Heart right ventricle (tissue), 16 donors: ENCODE measurements at regions of chr1 and their contacts with region 1.

Region 1: GRCh38 chr1:186082235-186082937 is 292.7 kb downstream of the TPR start:
- DNase-seq: peak; percentile 38 to 88
- ATAC-seq: peak; percentile 69 to 96 (median 91)
- H3K4me3 ChIP-seq: no peak overlapping the region
- H3K27ac ChIP-seq: peak overlapping the region in 5 of 10 donors; percentile 0 to 32 (median 12)
- H3K4me1 ChIP-seq: peaks cover 0 to 11% (median 0%) of the 10 kb centered on the region in 9 donors
- H3K27me3 ChIP-seq: no peaks in the 10 kb centered on the region
- CTCF ChIP-seq: no peak

Region 2: GRCh38 chr1:185984113-185984836 is 98.1 kb before region 1 on chr1:
- intact Hi-C with region 1: no loop called
- DNase-seq: no peak
- ATAC-seq: peak; percentile 78 to 95 (median 86)
- H3K4me3 ChIP-seq: no peak overlapping the region
- H3K27ac ChIP-seq: peak overlapping the region in 6 of 10 donors; percentile 15 to 68 (median 50)
- H3K4me1 ChIP-seq: peaks cover 0 to 27% (median 11%) of the 10 kb centered on the region in 9 donors
- H3K27me3 ChIP-seq: no peaks in the 10 kb centered on the region
- CTCF ChIP-seq: no peak

Region 3: GRCh38 chr1:186009039-186009737 is 73.2 kb before region 1 on chr1:
- intact Hi-C with region 1: no loop called
- DNase-seq: no peak
- ATAC-seq: peak in 6 of 8 donors; percentile 67 to 88 (median 77)
- H3K4me3 ChIP-seq: no peak overlapping the region
- H3K27ac ChIP-seq: peak overlapping the region in 9 of 10 donors; percentile 6 to 72 (median 53)
- H3K4me1 ChIP-seq: peaks cover 0 to 20% (median 0%) of the 10 kb centered on the region in 9 donors
- H3K27me3 ChIP-seq: no peaks in the 10 kb centered on the region
- CTCF ChIP-seq: no peak

Region 4: DNA sequence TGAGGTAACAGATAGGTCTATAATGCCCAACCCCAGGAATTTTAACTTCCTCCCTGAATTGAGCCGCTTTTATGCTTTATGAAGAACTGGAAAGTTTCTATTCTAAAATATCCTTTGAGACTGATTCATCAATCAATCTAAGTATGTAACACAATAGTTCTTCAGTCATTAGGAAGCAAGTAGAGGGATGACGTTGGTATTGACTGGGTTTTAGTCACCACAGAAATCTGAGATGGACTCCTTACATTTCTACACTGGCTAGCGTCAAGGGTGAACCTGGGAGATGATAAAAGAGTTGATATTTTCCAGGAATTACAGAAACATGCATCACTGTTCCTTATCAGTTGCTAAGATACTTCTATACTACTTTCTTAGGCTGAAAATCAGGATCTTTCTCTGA is 40.2 kb before region 1 on chr1:
- intact Hi-C with region 1: loop called in 1 of 10 experiments (anchors 5 kb)
- DNase-seq: no peak
- ATAC-seq: no peak
- H3K4me3 ChIP-seq: no peak overlapping the region
- H3K27ac ChIP-seq: no peak overlapping the region
- H3K4me1 ChIP-seq: peaks cover 0 to 24% (median 9%) of the 10 kb centered on the region in 9 donors
- H3K27me3 ChIP-seq: no peaks in the 10 kb centered on the region
- CTCF ChIP-seq: no peak

Region 5: DNA sequence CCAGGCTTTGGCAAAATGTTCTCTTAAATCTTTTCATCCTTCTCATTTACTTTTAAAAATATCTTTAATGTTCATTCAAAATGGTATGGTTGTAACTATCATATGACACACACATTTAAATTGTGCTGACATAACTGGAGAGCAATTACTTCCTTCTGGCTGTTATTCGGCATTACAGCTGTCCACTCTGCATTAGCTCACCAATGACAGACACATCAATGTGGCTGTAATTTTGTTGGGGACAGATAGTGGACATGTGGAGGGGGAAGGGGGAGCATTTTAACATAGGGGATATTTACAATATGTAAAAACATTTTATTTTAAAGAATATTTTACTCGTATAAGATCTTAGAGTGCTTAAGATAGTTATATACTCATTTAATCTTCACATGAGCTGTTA is 28.4 kb before region 1 on chr1:
- intact Hi-C with region 1: loop called in 1 of 10 experiments (anchors 1 kb)
- DNase-seq: no peak
- ATAC-seq: no peak
- H3K4me3 ChIP-seq: no peak overlapping the region
- H3K27ac ChIP-seq: no peak overlapping the region
- H3K4me1 ChIP-seq: peaks cover 0 to 1% (median 0%) of the 10 kb centered on the region in 9 donors
- H3K27me3 ChIP-seq: no peaks in the 10 kb centered on the region
- CTCF ChIP-seq: no peak